Activated CD8-positive, alpha-beta T cell treated with anti-CD3 and anti-CD28 coated beads, Interleukin-2, amount 10 ng/mL, durations not matched to agents 7 days and 5 days (primary cell): ENCODE measurements at regions of chr2 and their contacts with region 1.

Region 1: GRCh38 chr2:63424329-63425078 is 163.8 kb downstream of the WDPCP start:
- DNase-seq: peak; percentile 32
- ATAC-seq: peak; percentile 76
- H3K4me3 Mint-ChIP-seq: no peak overlapping the region
- H3K27ac Mint-ChIP-seq: no peak overlapping the region
- H3K4me1 Mint-ChIP-seq: peaks cover 4% of the 10 kb centered on the region
- H3K27me3 Mint-ChIP-seq: no peaks in the 10 kb centered on the region

Region 2: GRCh38 chr2:63078852-63079606 is 345.5 kb before region 1 on chr2:
- CTCF ChIA-PET with region 1: interaction called, 10 read pairs
- POLR2A ChIA-PET with region 1: no interaction called
- DNase-seq: peak; percentile 32
- ATAC-seq: no peak
- H3K4me3 Mint-ChIP-seq: no peak overlapping the region
- H3K27ac Mint-ChIP-seq: no peak overlapping the region
- H3K4me1 Mint-ChIP-seq: peaks cover 3% of the 10 kb centered on the region
- H3K27me3 Mint-ChIP-seq: peaks cover 13% of the 10 kb centered on the region

Region 3: DNA sequence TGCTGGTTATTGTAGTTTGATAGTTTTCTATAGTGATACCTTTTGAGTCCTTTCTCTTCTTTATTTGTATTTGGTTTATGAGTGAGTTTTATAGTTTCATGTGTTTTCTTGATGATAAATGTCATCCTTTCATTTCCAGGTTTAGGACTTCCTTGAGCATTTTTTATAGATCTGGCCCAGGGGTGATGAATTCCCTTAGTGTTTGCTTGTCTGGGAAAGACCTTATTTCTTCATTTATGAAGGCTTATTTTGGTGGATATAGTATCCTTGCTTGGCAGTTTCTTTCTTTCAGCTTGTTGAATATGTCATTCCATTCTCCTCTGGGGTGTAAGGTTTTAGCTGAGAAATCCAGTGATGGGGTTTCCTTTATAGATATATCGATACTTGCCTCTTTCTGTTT is 320.0 kb before region 1 on chr2:
- CTCF ChIA-PET with region 1: no interaction called
- POLR2A ChIA-PET with region 1: no interaction called
- DNase-seq: no peak
- ATAC-seq: no peak
- H3K4me3 Mint-ChIP-seq: no peak overlapping the region
- H3K27ac Mint-ChIP-seq: no peak overlapping the region
- H3K4me1 Mint-ChIP-seq: no peaks in the 10 kb centered on the region
- H3K27me3 Mint-ChIP-seq: peaks cover 3% of the 10 kb centered on the region

Region 4: GRCh38 chr2:63438181-63438580 is 13.7 kb after region 1 on chr2:
- CTCF ChIA-PET with region 1: interaction called, 10 read pairs
- POLR2A ChIA-PET with region 1: no interaction called
- DNase-seq: no peak
- ATAC-seq: no peak
- H3K4me3 Mint-ChIP-seq: no peak overlapping the region
- H3K27ac Mint-ChIP-seq: no peak overlapping the region
- H3K4me1 Mint-ChIP-seq: no peaks in the 10 kb centered on the region
- H3K27me3 Mint-ChIP-seq: no peaks in the 10 kb centered on the region